Cardiac septum (tissue), 1 donor: ENCODE measurements at regions of chr6 and their contacts with region 1.

Region 1: GRCh38 chr6:89242574-89243330 is 25.6 kb upstream of the GABRR1 start:
- DNase-seq: no peak

Region 2: DNA sequence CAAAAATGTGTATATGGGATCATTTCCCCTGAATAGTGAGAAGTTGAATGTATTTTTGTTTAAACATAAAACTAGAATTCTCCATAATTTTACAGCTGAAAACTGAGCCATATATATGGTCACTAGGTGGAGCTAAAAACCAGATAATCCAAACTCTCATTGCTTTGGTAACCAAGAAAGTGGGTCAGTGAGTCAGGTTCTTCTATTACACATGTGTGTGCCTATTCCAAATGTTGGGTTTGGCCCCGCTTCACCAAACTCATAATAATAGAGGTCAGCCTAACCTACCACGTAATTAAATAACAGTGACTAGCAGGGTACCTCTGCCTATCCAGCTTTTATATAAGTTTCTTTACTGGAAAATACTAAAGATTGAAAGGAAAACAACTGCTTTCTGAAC is 260.0 kb before region 1 on chr6:
- intact Hi-C with region 1: loop called (anchors 1 kb)
- DNase-seq: no peak

Region 3: DNA sequence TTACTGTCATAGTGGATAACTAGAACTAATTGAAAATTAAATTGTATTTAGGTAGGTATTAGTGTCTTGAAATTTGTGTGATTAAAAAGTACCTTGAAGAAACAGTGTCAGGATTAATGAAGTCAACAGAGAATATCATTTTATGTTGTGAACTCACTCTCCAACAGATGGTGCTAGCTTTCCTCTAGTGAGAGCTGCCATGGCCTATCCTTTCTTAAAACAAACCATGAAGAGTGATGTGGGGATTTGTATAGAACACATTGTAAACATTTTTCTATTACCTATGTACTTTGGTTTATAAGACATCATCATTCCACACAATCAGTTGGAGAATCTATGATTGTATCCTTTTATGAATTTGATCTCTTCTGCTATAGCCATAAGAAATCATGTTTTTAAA is 120.1 kb before region 1 on chr6:
- intact Hi-C with region 1: loop called (anchors 2 kb)
- DNase-seq: no peak

Region 4: DNA sequence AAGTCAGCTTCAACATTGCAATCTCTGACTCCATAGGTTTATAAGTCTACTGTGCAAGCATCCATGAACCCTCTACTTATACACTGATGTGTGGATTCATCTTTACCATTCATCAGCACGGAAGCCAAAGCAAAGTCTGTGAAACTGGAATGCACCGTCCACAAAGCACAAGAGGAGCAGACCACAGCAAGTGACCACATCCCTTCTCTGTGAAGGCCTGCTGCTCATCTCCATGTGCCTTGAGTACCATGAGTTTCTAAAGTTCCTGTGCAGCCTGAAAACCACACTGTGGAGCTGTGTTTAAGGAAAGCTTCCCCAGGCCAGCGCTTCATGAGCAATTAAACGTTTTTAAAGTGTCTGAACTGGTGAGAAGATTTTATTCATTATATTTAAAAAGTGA is 45.6 kb before region 1 on chr6:
- intact Hi-C with region 1: no loop called
- DNase-seq: no peak

Region 5: DNA sequence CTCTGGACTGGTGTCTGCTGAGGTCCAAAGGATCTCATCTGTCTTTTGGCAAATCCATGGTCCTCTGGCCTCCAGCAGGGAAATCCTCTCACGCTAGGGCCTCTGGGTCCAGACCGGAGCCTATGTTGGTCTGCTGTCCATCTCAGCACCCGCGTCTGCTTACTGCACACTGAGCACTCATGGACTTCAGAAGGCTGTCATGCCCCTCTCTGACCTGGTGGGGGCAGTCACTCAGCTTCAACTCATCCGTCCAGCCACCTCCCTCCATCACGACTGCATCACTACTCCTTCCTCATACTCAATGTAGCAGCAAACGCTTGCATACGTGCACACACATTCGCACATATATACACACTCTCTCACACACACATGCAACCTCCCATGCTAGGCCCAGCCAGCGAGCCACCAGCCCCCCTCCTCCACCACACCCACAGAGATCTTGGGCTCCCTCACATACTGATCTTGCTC is 39.1 kb after region 1 on chr6:
- intact Hi-C with region 1: no loop called
- DNase-seq: peak; percentile 84